Dorsolateral prefrontal cortex (tissue), 120 donors: ENCODE measurements at regions of chr1 and their contacts with region 1.

Region 1: DNA sequence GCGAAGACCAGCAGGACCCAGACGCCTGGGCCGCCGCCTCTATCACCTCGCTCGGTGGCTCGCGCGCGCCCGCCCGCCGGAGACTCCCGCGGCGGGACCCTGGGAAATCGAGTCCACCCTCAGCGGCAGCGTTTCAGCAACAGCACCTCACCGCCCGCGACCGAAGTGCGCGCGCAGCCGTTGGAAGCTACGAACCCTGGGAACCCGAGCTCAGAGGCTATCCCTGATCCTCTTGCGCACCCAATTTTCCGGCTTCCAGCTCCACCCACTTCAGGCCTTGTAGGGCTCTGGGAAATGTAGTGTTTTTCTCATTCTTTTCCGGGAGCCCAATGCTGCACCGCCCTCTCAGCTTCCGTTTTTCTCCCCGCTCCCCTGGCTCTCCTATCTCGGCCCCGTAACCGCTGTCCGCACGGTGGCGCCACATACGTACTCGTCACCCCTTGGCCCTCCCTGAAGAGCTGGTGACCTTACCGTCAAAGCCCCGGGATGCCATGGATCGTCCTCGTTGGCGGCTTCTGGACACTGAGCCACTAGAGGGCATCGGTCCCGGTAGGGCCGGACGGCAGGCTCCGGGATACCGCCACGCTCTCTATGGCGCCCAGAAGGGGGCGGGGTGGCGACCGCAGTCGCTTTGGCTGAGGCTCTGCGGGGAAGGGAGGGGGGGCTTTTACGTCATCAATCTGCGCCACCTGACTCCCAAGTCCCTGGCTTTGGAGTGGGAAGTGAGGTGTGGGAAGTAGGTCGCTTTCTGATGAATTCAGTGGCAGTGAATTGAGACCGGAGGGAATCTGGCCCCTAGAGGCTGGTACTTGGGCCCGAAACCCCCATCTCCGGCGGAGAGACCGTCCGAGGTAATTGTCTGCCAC is at the starts of genes ODR4 and TPR:
- DNase-seq: peak; percentile 94 to 97 (median 96)
- H3K4me3 ChIP-seq: peak within 1 kb of the TSS; percentile 63 to 99 (median 92)
- H3K27ac ChIP-seq: peak within 1 kb of the TSS; percentile 86 to 99 (median 97)
- H3K27me3 ChIP-seq: no peaks in the 10 kb centered on the region
- CTCF ChIP-seq: peak; percentile 72 to 98 (median 91)
- total RNA-seq, gene ODR4: 19.6 to 46.4 (median 29.3) TPM
- total RNA-seq, gene TPR: 56.1 to 92.2 (median 74.2) TPM

Region 2: DNA sequence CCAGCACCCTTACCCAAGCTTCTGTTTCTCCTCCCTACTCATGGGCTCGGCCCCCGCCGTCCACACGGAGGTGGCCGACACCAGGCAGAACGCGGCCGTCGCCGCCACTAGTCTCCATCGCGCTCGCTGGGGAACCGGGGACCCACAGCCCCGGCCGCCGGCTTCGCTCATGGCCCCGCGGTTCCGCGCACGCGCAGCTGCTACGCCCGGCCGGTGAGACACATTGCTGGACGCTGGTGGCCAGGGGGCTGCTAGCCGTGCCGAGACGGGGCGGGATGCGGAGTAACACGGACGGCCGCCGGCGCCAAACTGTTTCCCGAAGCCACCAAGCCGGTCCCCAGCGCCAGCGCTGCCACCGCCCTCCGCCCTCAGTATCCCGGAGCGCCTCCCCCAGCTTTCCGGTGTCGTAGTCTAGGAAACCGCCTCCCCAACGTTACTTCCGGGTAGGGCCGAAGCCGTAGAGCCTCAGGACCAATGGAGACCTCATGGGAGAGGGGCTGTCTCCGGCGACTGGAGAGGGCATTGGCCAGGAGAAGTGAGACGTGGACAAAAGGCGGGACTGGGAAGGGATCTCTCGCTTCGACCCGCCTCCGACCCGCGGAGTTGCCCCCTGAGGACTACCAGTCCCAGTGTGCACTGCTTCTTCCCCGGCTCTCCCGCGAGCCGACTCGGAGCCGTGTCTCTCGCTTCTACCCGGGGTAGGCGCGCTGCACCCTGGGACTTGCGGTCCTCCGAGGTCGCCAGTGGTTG is 1620.7 kb before region 1 on chr1 and contains the start of gene EDEM3:
- intact Hi-C with region 1: loop called (anchors 10 kb)
- DNase-seq: peak; percentile 93 to 100 (median 99)
- H3K4me3 ChIP-seq: peak within 1 kb of the TSS; percentile 73 to 99 (median 94)
- H3K27ac ChIP-seq: peak within 1 kb of the TSS; percentile 55 to 96 (median 91)
- H3K27me3 ChIP-seq: no peaks in the 10 kb centered on the region
- CTCF ChIP-seq: peak in 26 of 56 donors; percentile 3 to 63 (median 22)
- total RNA-seq, gene EDEM3: 24.0 to 54.0 (median 35.6) TPM